ENCODE measurements at regions of chr10 and their contacts with region 1.

Region 1: DNA sequence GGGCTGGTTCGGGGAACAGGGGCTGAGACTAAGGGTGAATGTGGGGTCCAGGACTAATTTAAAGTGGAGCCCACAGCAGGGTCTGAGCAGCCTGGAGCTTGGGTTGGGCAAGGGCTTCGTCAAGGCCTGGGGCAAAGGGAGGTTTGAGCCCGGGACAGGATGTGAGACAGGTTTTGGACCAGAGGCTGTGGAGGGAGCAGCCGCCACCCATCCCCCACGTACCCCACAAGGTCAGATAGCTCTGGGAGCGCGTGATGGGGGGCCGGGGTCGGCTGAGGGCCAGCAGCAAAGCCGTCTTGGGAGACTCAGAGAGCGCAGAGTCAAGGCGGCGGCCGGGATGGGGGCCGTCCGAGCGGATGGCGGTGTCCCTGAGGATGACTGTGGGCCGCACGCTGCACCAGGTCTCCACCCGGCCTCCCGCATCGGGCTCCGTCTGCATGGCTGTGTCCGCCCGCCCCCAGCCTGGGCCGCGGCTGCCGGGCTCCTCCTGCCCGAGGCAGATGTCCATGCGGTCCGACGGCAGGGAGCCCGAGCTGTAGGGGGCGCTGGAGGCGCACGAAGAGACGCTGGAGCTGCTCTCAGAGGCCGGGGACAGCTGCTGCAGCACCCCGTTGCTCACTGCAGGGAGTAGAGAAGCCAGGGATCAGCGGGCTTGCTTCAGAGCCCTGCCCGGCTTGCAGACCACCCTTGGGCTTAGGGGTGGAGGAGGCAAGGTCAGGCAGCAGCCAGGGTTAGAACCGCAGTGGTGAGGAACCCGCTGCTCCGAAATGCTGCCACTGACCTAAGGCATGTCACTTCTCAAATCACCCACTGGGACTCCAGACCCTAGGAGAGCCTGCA is 12.1 kb downstream of the PDZD7 start:
- DNase-seq: peak; percentile 94
- H3K4me3 ChIP-seq: no peak overlapping the region; a peak in 1 of 4 replicates
- H3K27ac ChIP-seq: no peak overlapping the region
- H3K4me1 ChIP-seq: peaks cover 4 to 8% of the 10 kb centered on the region in 2 experiments; a peak in 3 of 4 replicates
- H3K27me3 ChIP-seq: no peaks in the 10 kb centered on the region
- CTCF ChIP-seq: peak; percentile 76
- EP300 ChIP-seq: no peak
- RAD21 ChIP-seq: peak; percentile 76

Region 2: GRCh38 chr10:100791369-100792058 is 227.3 kb before region 1 on chr10:
- CTCF ChIA-PET with region 1: no interaction called
- POLR2A ChIA-PET with region 1: no interaction called
- DNase-seq: peak; percentile 41
- H3K4me3 ChIP-seq: no peak overlapping the region
- H3K27ac ChIP-seq: peak overlapping the region in 1 of 2 experiments; percentile 57; a peak in 1 of 4 replicates
- H3K4me1 ChIP-seq: peaks cover 0 to 49% of the 10 kb centered on the region in 2 experiments; a peak in 1 of 4 replicates
- H3K27me3 ChIP-seq: peaks cover 27% of the 10 kb centered on the region; the same call in 1 of the 2 replicates
- CTCF ChIP-seq: no peak
- EP300 ChIP-seq: no peak
- RAD21 ChIP-seq: no peak

Region 3: GRCh38 chr10:100998991-100999741 is 19.7 kb before region 1 on chr10:
- CTCF ChIA-PET with region 1: interaction called, 443 read pairs
- POLR2A ChIA-PET with region 1: interaction called, 8 read pairs
- DNase-seq: peak; percentile 93
- H3K4me3 ChIP-seq: peak overlapping the region; percentile 66 to 90
- H3K27ac ChIP-seq: peak overlapping the region; percentile 98 to 99
- H3K4me1 ChIP-seq: peaks cover 20 to 37% of the 10 kb centered on the region in 2 experiments; a peak in 3 of 4 replicates
- H3K27me3 ChIP-seq: no peaks in the 10 kb centered on the region
- CTCF ChIP-seq: peak; percentile 77
- EP300 ChIP-seq: no peak; a peak in 1 of 4 replicates
- RAD21 ChIP-seq: peak; percentile 52

Region 4: DNA sequence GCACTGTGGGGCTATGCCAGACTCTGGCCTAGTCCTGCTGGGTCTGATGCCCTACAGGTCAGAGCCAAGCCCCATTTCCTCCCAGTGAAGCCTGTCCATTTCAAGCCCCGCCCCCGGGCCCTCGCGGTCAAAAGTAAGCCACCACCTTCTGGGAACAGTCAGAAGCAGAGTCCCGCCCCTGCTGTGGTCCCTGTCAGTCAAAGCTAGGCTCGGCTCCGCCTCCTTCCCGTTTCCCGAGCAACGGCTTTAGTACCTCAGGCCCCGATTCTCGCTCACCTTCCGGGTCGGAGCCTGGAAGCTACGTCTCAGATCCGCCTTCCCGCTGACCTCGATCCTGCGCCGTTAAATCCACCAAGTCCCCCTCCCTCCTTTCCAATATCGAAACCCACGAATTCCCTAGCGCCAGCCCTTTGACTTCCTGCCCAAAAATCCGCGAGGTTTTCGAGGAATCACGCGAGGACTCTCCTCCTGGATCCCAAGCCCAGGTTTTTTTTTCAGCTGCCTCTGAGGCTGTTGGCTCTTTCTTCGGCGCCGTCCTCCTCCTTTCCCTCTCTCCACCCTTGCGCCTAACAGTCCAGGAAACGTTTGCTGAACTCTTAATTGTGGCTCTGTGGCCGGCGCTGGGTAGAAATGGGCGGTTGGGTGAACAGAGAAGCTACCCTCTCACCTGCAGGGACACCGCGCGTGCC is 24.0 kb after region 1 on chr10:
- CTCF ChIA-PET with region 1: interaction called, 98 read pairs
- POLR2A ChIA-PET with region 1: interaction called, 3 read pairs
- DNase-seq: peak; percentile 91
- H3K4me3 ChIP-seq: peak overlapping the region; percentile 53 to 68
- H3K27ac ChIP-seq: peak overlapping the region; percentile 91 to 97
- H3K4me1 ChIP-seq: peaks cover 10 to 18% of the 10 kb centered on the region in 2 experiments
- H3K27me3 ChIP-seq: no peaks in the 10 kb centered on the region
- CTCF ChIP-seq: no peak
- EP300 ChIP-seq: no peak
- RAD21 ChIP-seq: no peak

Region 5: GRCh38 chr10:101060036-101060950 is 41.5 kb after region 1 on chr10:
- CTCF ChIA-PET with region 1: interaction called, 70 read pairs
- POLR2A ChIA-PET with region 1: no interaction called
- DNase-seq: peak; percentile 73
- H3K4me3 ChIP-seq: peak overlapping the region; percentile 83 to 100
- H3K27ac ChIP-seq: peak overlapping the region; percentile 97 to 98
- H3K4me1 ChIP-seq: peaks cover 19 to 23% of the 10 kb centered on the region in 2 experiments; a peak in 3 of 4 replicates
- H3K27me3 ChIP-seq: no peaks in the 10 kb centered on the region
- CTCF ChIP-seq: peak; percentile 96
- EP300 ChIP-seq: no peak
- RAD21 ChIP-seq: peak; percentile 85

Region 6: DNA sequence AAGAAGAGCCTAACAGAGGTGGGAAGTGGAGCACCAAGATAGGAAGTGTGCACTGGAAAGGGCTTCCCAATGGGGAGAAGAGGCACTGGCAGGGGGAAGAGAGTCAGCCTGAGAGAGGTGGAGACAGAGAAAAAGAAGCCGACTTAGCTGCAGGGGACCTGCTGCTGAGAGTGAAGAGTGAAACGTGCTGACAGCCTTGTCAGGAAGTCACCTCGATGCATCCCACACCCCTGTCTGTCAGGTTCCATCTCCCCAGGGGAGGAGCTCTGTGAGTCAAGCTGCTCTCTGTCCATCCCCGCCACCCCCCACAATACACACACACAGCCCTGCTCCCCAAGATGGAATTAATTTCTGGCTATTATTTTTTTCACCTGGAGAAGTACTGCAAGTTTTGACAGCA is 57.0 kb after region 1 on chr10:
- CTCF ChIA-PET with region 1: interaction called, 60 read pairs
- POLR2A ChIA-PET with region 1: no interaction called
- DNase-seq: no peak
- H3K4me3 ChIP-seq: no peak overlapping the region
- H3K27ac ChIP-seq: no peak overlapping the region
- H3K4me1 ChIP-seq: peaks cover 0 to 12% of the 10 kb centered on the region in 2 experiments; a peak in 1 of 4 replicates
- H3K27me3 ChIP-seq: peaks cover 34% of the 10 kb centered on the region; the same call in 1 of the 2 replicates
- CTCF ChIP-seq: no peak
- EP300 ChIP-seq: no peak
- RAD21 ChIP-seq: no peak

Measured in SK-N-SH (cell line).